Activated naive CD4-positive, alpha-beta T cell treated with anti-CD3 and anti-CD28 coated beads, Interleukin-2, amount 10 ng/mL, durations not matched to agents 7 days and 5 days (primary cell): ENCODE measurements at regions of chr2 and their contacts with region 1.

Region 1: DNA sequence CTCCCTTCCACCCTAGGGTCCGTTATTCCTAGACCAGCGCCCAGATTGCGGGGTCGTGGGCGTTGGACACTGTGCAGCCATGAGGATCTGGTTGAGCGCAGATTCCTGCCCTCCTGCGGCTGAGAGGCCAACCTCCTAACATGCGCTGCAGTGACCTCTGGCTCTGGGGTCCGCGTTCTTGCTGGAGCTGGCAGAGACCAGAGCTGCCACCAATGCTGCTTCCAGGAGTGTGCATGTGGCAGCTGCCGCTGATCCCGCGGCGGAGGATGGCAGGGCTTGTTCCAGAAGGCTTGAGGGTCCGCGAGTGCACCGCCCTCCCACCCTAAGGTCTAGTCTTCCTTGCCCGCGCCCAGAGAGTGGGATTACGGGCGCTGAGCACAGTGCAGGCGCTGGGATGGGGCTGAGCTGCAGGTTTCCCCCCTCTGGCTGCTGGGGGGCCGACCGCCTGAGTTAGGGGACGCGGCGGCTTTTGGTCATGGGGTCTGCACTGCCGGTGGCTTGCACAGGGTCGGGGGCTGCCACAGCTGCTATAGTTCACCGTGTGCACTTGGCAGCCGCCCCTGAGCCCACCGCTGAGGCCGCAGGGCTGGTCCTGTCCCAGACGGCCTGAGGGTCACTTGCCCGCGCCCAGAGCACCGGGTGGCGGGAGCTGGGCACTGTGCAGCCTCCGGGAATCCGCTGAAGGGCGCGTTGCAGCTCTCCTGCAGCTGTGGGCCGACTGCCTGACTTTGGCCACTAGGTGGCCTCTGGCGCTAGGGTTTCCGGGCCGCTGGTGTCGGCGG is 145.9 kb downstream of the CCDC74A start:
- DNase-seq: peak; percentile 75
- H3K4me3 Mint-ChIP-seq: no peak overlapping the region
- H3K27ac Mint-ChIP-seq: no peak overlapping the region
- H3K4me1 Mint-ChIP-seq: peaks cover 15% of the 10 kb centered on the region
- H3K27me3 Mint-ChIP-seq: peaks cover 65% of the 10 kb centered on the region

Region 2: DNA sequence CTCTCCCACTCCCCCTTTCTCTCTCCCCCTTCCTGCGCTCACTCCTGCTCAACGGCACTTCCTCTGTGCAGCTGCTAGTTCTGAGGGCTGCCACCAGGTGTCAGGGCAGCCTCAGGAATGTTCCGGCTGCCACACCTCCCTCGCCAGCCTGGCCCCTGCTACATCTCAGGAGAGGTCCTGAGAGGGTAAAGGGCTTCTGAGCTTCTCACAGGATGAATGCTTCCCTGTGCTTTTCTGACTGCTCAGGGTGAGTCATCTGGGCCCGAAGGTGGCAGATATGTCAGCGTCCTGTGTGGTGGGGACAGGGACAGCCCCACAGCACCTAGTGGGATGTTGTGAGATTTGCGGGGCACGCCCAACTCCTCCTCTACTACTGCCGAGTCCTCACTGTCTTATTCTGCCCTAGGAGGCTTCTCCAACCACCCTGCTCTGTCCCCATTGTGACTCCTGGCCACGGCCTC is 519.5 kb before region 1 on chr2:
- CTCF ChIA-PET with region 1: interaction called, 29 read pairs
- DNase-seq: peak; percentile 73
- H3K4me3 Mint-ChIP-seq: no peak overlapping the region
- H3K27ac Mint-ChIP-seq: no peak overlapping the region
- H3K4me1 Mint-ChIP-seq: peaks cover 35% of the 10 kb centered on the region
- H3K27me3 Mint-ChIP-seq: no peaks in the 10 kb centered on the region

Region 3: DNA sequence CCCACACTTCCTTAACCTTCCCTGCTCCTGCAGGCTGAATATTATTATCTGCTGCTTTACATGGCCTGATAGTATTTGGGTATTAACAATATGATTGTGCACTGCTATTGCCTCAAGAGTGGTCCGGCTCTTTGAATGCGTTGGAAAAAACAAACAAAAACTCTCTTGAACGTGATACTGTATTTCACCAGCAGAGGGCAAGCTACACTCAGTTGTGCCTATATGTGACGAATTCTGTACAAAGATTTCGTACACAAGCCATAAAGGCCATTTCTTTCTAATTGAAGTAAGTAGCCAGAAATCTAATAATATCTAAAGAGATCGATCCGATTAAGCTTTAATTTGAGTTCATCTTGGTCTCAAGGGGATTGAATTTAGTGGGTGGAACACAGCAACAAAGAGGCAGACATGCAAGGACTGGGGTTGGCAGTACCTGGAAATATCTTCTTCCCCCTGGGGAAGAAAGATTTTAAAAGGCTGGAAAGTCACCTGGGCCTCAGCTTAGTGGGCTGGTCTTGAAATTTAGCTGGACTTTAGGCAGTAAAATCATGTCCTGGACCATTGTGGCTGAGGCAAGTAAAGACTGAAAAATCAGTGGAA is 260.3 kb before region 1 on chr2:
- CTCF ChIA-PET with region 1: interaction called, 65 read pairs
- DNase-seq: peak; percentile 31
- H3K4me3 Mint-ChIP-seq: no peak overlapping the region
- H3K27ac Mint-ChIP-seq: no peak overlapping the region
- H3K4me1 Mint-ChIP-seq: no peaks in the 10 kb centered on the region
- H3K27me3 Mint-ChIP-seq: peaks cover 27% of the 10 kb centered on the region

Region 4: GRCh38 chr2:131567891-131568290 is 105.7 kb before region 1 on chr2:
- CTCF ChIA-PET with region 1: no interaction called
- DNase-seq: no peak
- H3K4me3 Mint-ChIP-seq: no peak overlapping the region
- H3K27ac Mint-ChIP-seq: no peak overlapping the region
- H3K4me1 Mint-ChIP-seq: no peaks in the 10 kb centered on the region
- H3K27me3 Mint-ChIP-seq: peaks cover 9% of the 10 kb centered on the region

Region 5: DNA sequence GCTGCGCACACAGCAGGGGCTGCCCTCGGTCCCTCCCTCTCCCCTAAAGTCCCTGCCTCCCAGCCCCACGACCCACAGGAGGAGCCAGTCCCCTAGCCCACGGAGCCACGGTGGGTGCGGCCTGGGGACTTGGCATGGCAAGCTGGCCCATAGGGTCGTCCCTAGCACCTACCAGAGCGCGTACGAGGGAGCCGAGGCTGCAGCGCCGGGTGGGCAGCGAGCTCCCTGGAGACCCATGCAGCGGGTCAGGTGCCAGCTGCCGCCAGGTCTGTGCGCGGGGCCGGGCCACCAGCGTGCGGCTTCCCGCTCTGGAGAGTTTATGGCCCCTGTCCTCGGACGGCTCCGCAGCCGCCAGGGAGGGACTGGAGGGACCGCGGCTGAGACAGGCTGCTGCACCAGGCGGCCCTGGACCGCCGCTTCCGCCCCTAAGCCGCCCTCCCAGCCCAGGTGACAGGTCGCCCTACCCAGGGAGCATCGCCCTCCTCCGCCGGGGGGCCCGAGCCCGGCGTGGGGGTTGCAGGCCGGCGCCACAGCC is 127.7 kb after region 1 on chr2:
- CTCF ChIA-PET with region 1: interaction called, 22 read pairs
- DNase-seq: no peak
- H3K4me3 Mint-ChIP-seq: no peak overlapping the region
- H3K27ac Mint-ChIP-seq: no peak overlapping the region
- H3K4me1 Mint-ChIP-seq: peaks cover 7% of the 10 kb centered on the region
- H3K27me3 Mint-ChIP-seq: peaks cover 13% of the 10 kb centered on the region